ENCODE measurements at regions of chr11 and their contacts with region 1.

Region 1: DNA sequence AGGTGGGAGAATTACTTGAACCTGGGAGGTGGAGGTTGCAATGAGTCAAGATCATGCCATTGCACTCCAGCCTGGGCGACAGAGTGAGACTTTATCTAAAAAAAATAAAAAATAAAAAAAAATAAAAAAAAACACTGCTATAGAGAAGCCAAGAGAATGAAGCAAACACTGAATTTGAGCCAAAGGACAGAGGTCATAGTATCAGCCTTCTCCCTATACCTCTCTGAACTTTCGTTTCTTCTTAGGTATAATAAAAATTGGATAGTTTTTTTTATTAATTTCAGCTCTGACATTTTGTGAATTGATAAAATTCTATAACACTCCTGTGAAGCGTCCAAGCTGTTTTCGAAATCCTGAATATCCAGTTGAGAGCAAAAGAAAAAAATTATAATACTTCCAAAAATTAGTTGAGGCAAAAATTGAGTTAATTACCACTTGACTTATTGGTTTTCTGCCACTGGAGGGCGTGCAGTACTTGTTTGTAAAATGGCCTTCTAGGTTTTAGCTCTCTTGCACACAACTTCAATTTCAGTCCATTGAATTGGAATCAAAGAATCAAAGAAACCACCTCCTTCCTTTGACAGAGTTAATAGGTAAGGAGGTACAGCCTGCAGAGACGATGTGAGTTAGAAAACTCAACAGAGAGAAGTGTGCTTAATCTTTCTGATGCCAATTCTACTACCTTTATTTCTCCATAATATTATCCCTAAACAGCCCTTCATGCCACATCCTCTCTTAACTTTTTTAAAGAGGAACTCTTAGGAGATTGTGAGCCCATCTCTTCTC is 143.2 kb downstream of the BBOX1 start:
- DNase-seq: peak; percentile 33 to 78
- ATAC-seq: peak; percentile 34 to 78; a peak in 3 of 6 replicates
- H3K4me3 ChIP-seq: no peak overlapping the region
- H3K27ac ChIP-seq: peak overlapping the region; percentile 32 to 44
- H3K4me1 ChIP-seq: peaks cover 18% of the 10 kb centered on the region
- CTCF ChIP-seq: peak; percentile 95
- EP300 ChIP-seq: no peak
- POLR2A ChIP-seq: no peak
- RAD21 ChIP-seq: peak; percentile 97

Region 2: GRCh38 chr11:26572781-26573255 is 611.0 kb before region 1 on chr11:
- CTCF ChIA-PET with region 1: no interaction called
- POLR2A ChIA-PET with region 1: no interaction called
- DNase-seq: no peak
- ATAC-seq: no peak
- H3K4me3 ChIP-seq: no peak overlapping the region
- H3K27ac ChIP-seq: no peak overlapping the region
- H3K4me1 ChIP-seq: no peaks in the 10 kb centered on the region
- CTCF ChIP-seq: no peak
- EP300 ChIP-seq: no peak
- POLR2A ChIP-seq: no peak
- RAD21 ChIP-seq: no peak

Region 3: GRCh38 chr11:27201454-27202236 is 17.8 kb after region 1 on chr11:
- CTCF ChIA-PET with region 1: interaction called, 24 read pairs
- POLR2A ChIA-PET with region 1: no interaction called
- DNase-seq: peak; percentile 76 to 92
- ATAC-seq: peak; percentile 67 to 79; a peak in 5 of 6 replicates
- H3K4me3 ChIP-seq: no peak overlapping the region
- H3K27ac ChIP-seq: peak overlapping the region; percentile 77 to 80
- H3K4me1 ChIP-seq: peaks cover 62% of the 10 kb centered on the region
- CTCF ChIP-seq: no peak
- EP300 ChIP-seq: no peak; a peak in 1 of 5 replicates
- POLR2A ChIP-seq: no peak
- RAD21 ChIP-seq: 0 out of 5 replicates have a peak, but pooled peaks of 1 of the 2 experiments have one; percentile 24

Region 4: GRCh38 chr11:27241311-27242122 is 57.7 kb after region 1 on chr11:
- CTCF ChIA-PET with region 1: interaction called, 13 read pairs
- POLR2A ChIA-PET with region 1: no interaction called
- DNase-seq: peak in 1 of 2 experiments; percentile 19
- ATAC-seq: peak; percentile 52 to 70; a peak in 4 of 6 replicates
- H3K4me3 ChIP-seq: no peak overlapping the region
- H3K27ac ChIP-seq: no peak overlapping the region
- H3K4me1 ChIP-seq: peaks cover 13% of the 10 kb centered on the region; the same call in 1 of the 3 replicates
- CTCF ChIP-seq: no peak
- EP300 ChIP-seq: no peak
- POLR2A ChIP-seq: no peak
- RAD21 ChIP-seq: no peak

Region 5: GRCh38 chr11:27304514-27304913 is 120.6 kb after region 1 on chr11:
- CTCF ChIA-PET with region 1: interaction called, 126 read pairs
- POLR2A ChIA-PET with region 1: no interaction called
- DNase-seq: no peak
- ATAC-seq: peak; percentile 56 to 80; a peak in 4 of 6 replicates
- H3K4me3 ChIP-seq: no peak overlapping the region
- H3K27ac ChIP-seq: no peak overlapping the region
- H3K4me1 ChIP-seq: no peaks in the 10 kb centered on the region
- CTCF ChIP-seq: no peak
- EP300 ChIP-seq: no peak
- POLR2A ChIP-seq: no peak
- RAD21 ChIP-seq: no peak

Region 6: DNA sequence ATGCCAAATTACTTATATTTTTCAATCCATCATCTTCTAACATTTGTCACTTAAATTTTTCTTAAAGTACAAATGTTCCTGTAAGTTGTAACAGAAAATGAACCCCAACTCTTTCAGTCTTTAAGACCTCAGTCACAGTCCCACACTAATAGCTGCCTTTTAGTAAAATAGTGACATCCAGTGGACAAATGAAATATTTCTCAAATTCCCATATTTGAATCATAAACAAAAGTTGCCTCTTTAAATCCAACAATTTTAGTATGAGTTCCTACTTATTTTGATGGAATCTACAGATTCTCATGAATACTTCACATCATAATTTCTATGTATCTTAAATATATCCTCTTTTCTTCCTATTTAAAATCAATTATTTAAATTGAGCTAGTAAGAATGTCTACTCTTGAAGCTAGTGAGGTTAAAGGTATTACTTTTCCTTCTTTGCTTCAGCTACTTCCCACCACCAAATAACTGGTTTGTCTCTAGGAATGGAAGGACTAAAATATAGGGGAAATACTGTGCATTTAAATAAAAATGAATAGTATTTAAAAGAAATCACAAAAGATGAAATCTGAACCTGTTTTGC is 313.5 kb after region 1 on chr11:
- CTCF ChIA-PET with region 1: interaction called, 41 read pairs
- POLR2A ChIA-PET with region 1: no interaction called
- DNase-seq: peak in 1 of 2 experiments; percentile 33
- ATAC-seq: peak; percentile 50 to 79; a peak in 4 of 6 replicates
- H3K4me3 ChIP-seq: no peak overlapping the region
- H3K27ac ChIP-seq: no peak overlapping the region
- H3K4me1 ChIP-seq: peaks cover 15% of the 10 kb centered on the region
- CTCF ChIP-seq: peak; percentile 80
- EP300 ChIP-seq: no peak
- POLR2A ChIP-seq: no peak
- RAD21 ChIP-seq: peak; percentile 66 to 71; a peak in 4 of 5 replicates